Psoas muscle (tissue), 8 donors: ENCODE measurements at regions of chr3 and their contacts with region 1.

Region 1: DNA sequence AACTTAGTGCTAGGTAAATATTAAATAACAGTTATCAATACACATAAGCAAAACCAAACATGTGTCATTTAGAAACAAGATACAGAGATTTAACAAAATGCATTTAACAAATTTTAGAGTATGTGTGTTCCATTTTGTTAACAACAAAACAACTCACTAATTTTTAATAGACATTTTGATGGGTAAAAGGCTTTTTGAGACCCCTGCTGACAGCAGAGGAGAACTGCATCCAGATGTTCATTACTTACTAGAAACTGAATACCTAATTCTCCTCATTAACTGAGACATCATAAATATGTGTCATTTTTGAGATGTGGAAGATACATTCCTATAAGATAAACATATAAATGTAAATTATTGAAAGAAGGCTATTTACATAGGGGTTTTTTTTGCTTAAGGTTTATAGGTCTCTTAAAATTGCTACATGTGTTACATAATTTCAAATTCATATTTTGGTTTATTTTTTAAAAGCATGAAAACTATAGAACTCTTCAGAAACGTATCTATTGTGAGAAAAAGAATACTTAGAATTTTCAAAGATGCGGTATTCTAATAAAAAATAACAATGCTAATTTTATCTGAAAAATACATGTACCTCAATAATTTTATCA is 1009.8 kb downstream of the TUSC7 start:
- DNase-seq: no peak
- ATAC-seq: no peak
- H3K4me3 ChIP-seq: no peak overlapping the region
- H3K27ac ChIP-seq: no peak overlapping the region
- H3K4me1 ChIP-seq: no peaks in the 10 kb centered on the region
- H3K27me3 ChIP-seq: no peaks in the 10 kb centered on the region
- CTCF ChIP-seq: peak; percentile 62

Region 2: DNA sequence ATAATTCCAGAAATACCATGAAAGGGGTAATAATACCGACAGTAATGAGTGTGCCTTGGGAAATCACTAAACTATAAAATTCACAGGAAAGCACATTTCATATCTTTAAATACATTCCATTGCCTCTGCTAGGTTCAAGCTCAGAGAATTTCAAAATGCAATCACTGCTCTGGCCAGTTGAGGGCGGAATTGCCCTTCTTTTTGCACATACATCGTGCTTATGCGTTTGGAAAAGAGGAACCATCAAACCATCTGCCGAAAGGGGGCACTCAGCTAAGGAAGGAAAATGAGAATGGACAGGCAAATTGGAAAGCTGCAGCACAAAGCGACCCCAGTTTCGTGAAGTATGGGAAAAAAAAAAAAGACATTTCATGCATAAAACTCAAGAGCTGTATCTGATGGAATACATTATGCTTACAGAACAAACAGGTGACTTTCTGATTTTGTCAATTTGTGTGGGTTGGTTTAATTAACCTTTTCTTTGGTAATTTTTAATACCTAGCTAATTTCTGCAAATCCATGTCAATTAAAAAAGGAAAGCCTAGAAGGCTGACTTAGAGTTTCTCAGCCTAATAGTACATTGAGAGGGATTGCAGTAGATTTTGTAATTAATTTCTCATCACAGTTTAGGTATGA is 948.5 kb before region 1 on chr3:
- intact Hi-C with region 1: loop called in 1 of 2 experiments (anchors 5 kb)
- DNase-seq: peak; percentile 18 to 55
- ATAC-seq: peak in 2 of 4 donors; percentile 55 to 66
- H3K4me3 ChIP-seq: no peak overlapping the region
- H3K27ac ChIP-seq: no peak overlapping the region
- H3K4me1 ChIP-seq: no peaks in the 10 kb centered on the region
- H3K27me3 ChIP-seq: no peaks in the 10 kb centered on the region
- CTCF ChIP-seq: peak; percentile 64